Activated T-helper 2 cell treated with anti-CD3 and anti-CD28 coated beads, Interferon-gamma antibody, Interleukin-2, Interleukin-4, amounts not matched to agents 10 μg/mL and 5 μg/mL and 100 μg/mL, durations not matched to agents 14 hours and 24 hours and 36 hours (primary cell): ENCODE measurements at regions of chr3 and their contacts with region 1.

Region 1: DNA sequence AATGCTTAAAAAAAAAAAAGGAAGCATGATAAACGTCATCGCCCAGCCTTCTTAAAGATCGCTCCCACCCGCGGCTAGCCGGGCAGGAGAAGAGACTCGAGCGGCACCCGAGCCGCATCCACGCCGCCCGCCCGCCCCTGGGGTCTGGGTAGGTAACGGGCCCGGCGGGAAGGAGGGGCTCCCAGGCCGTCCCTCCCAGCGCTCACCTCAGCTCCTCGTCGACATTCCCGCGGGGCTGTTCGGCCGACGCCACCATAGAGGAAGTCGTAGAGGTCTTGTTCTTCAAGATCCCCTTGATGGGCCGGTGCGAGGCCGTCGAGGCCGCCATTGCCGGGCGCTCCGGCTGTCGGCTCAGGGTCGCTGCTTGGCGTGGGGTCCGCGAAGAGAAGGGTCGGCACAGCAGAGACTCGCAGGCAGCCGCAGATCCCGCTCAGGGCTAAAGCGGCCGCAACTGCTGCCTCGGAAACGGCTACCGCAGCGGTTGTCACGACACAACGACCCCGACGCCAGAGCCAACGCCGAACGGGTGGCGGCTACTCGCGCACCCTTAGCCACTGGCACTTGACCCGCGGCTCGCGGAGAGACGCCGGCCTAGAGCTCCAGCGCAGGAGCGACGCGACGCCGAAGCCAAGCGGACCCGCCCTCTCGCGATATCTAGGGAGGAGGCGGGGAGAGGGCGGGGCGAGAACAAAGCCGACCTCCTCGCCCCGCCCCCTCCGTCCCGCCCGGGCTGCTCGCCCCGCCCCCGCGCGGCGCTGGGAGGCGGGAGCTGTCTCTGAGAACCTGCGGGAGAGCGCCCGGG is at the start of gene PPP1R2:
- DNase-seq: peak; percentile 88
- H3K4me3 Mint-ChIP-seq: peak within 1 kb of the TSS; percentile 88
- H3K27ac Mint-ChIP-seq: peak within 1 kb of the TSS; percentile 82
- H3K4me1 Mint-ChIP-seq: peaks cover 72% of the 10 kb centered on the region
- H3K27me3 Mint-ChIP-seq: no peaks in the 10 kb centered on the region
- total RNA-seq, gene PPP1R2: 74.2 and 75.0 TPM in 2 replicates

Region 2: GRCh38 chr3:194486540-194487288 is 1056.2 kb before region 1 on chr3 and contains the start of gene ATP13A3:
- intact Hi-C with region 1: loop called (anchors 5 kb)
- DNase-seq: peak; percentile 87
- H3K4me3 Mint-ChIP-seq: peak within 1 kb of the TSS; percentile 89
- H3K27ac Mint-ChIP-seq: peak within 1 kb of the TSS; percentile 89
- H3K4me1 Mint-ChIP-seq: peaks cover 51% of the 10 kb centered on the region
- H3K27me3 Mint-ChIP-seq: no peaks in the 10 kb centered on the region
- total RNA-seq, gene ATP13A3: 136 and 150 TPM in 2 replicates

Region 3: GRCh38 chr3:195271116-195271858 is 271.6 kb before region 1 on chr3 and contains the start of gene XXYLT1:
- intact Hi-C with region 1: loop called (anchors 5 kb)
- DNase-seq: peak; percentile 86
- H3K4me3 Mint-ChIP-seq: peak within 1 kb of the TSS; percentile 86
- H3K27ac Mint-ChIP-seq: peak within 1 kb of the TSS; percentile 84
- H3K4me1 Mint-ChIP-seq: peaks cover 23% of the 10 kb centered on the region
- H3K27me3 Mint-ChIP-seq: no peaks in the 10 kb centered on the region
- total RNA-seq, gene XXYLT1: 15.8 and 16.1 TPM in 2 replicates

Region 4: GRCh38 chr3:195442573-195443390 is 100.1 kb before region 1 on chr3 and contains the start of gene ACAP2:
- intact Hi-C with region 1: loop called (anchors 5 kb)
- DNase-seq: peak; percentile 99
- H3K4me3 Mint-ChIP-seq: peak within 1 kb of the TSS; percentile 94
- H3K27ac Mint-ChIP-seq: peak within 1 kb of the TSS; percentile 85
- H3K4me1 Mint-ChIP-seq: peaks cover 31% of the 10 kb centered on the region
- H3K27me3 Mint-ChIP-seq: no peaks in the 10 kb centered on the region
- total RNA-seq, gene ACAP2: 49.8 and 51.5 TPM in 2 replicates

Region 5: GRCh38 chr3:195522254-195523023 is 20.5 kb before region 1 on chr3:
- intact Hi-C with region 1: loop called (anchors 1 kb)
- DNase-seq: no peak
- H3K4me3 Mint-ChIP-seq: no peak overlapping the region
- H3K27ac Mint-ChIP-seq: no peak overlapping the region
- H3K4me1 Mint-ChIP-seq: peaks cover 35% of the 10 kb centered on the region
- H3K27me3 Mint-ChIP-seq: no peaks in the 10 kb centered on the region

Region 6: GRCh38 chr3:195556387-195556786 is 13.5 kb after region 1 on chr3:
- intact Hi-C with region 1: no loop called
- DNase-seq: no peak
- H3K4me3 Mint-ChIP-seq: no peak overlapping the region
- H3K27ac Mint-ChIP-seq: no peak overlapping the region
- H3K4me1 Mint-ChIP-seq: peaks cover 38% of the 10 kb centered on the region
- H3K27me3 Mint-ChIP-seq: no peaks in the 10 kb centered on the region

Region 7: DNA sequence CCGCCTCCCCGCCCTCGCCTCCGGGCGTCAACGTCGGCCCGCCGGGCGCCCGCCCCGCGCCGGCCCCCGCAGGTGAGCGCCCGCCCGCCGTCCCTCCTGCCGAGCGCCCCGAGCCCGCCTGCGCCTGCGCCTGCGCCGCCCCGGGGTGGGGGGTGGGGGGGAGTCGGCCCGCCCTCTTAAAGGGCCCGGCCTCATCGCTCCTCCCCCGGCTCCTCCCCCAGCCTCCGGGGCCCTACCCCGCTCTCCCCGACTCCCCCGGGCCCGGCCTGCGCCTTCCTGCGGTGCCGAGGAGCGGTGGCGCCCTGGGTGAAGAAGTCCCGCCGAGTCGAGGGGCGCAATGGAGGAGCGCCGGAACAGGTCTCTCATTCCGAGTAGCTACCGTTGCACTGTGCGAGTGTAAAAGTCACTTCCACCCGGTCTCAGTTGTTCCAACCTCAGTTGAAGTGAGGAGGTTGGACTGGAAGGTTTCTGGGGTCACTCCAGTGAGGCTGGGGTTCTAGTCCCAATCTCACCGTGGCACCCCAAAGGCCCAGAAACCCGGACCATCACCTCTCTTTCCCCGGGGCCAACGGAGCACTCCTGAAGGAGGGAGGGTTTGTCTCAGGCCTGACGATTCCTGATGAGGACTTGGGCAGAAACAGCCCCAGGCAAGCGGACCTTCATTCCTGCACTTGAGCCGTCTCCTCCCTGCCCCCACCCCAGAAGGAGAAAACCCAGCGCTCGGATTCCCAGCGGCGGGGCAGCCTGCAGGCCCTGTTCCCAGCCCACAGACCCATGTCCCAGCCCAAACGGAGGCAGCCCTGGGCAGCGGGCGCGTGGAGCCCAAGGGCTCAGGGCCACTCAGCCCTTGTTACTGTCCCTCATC is 367.0 kb after region 1 on chr3:
- intact Hi-C with region 1: loop called (anchors 5 kb)
- DNase-seq: peak; percentile 84
- H3K4me3 Mint-ChIP-seq: peak overlapping the region; percentile 57
- H3K27ac Mint-ChIP-seq: peak overlapping the region; percentile 70
- H3K4me1 Mint-ChIP-seq: peaks cover 32% of the 10 kb centered on the region
- H3K27me3 Mint-ChIP-seq: no peaks in the 10 kb centered on the region